Activated B cell treated with CpG ODN at 0.5 μM for 24 hours (primary cell): ENCODE measurements at regions of chr14 and their contacts with region 1.

Region 1: GRCh38 chr14:69153131-69153872 is 383 bp upstream of the DCAF5 start:
- DNase-seq: peak; percentile 81
- ATAC-seq: peak; percentile 93
- H3K4me3 Mint-ChIP-seq: peak overlapping the region; percentile 95
- H3K27ac Mint-ChIP-seq: peak overlapping the region; percentile 88
- H3K4me1 Mint-ChIP-seq: peaks cover 28% of the 10 kb centered on the region
- H3K27me3 Mint-ChIP-seq: no peaks in the 10 kb centered on the region
- CTCF ChIP-seq: no peak

Region 2: GRCh38 chr14:67704484-67705089 is 1448.7 kb before region 1 on chr14:
- CTCF ChIA-PET with region 1: no interaction called
- POLR2A ChIA-PET with region 1: interaction called, 10 read pairs
- intact Hi-C with region 1: no loop called
- DNase-seq: no peak
- ATAC-seq: peak; percentile 81
- H3K4me3 Mint-ChIP-seq: no peak overlapping the region
- H3K27ac Mint-ChIP-seq: no peak overlapping the region
- H3K4me1 Mint-ChIP-seq: no peaks in the 10 kb centered on the region
- H3K27me3 Mint-ChIP-seq: no peaks in the 10 kb centered on the region
- CTCF ChIP-seq: no peak

Region 3: GRCh38 chr14:69191340-69192111 is 38.2 kb after region 1 on chr14 and contains the start of gene EXD2:
- CTCF ChIA-PET with region 1: interaction called, 4 read pairs
- POLR2A ChIA-PET with region 1: interaction called, 23 read pairs
- intact Hi-C with region 1: loop called (anchors 1 kb)
- DNase-seq: peak; percentile 58
- ATAC-seq: peak; percentile 84
- H3K4me3 Mint-ChIP-seq: peak within 1 kb of the TSS; percentile 93
- H3K27ac Mint-ChIP-seq: peak within 1 kb of the TSS; percentile 83
- H3K4me1 Mint-ChIP-seq: peaks cover 16% of the 10 kb centered on the region
- H3K27me3 Mint-ChIP-seq: peaks cover 3% of the 10 kb centered on the region
- CTCF ChIP-seq: no peak
- total RNA-seq, gene EXD2: 5.2 and 6.9 TPM in 2 replicates

Region 4: GRCh38 chr14:69553221-69553620 is 399.9 kb after region 1 on chr14:
- CTCF ChIA-PET with region 1: no interaction called
- POLR2A ChIA-PET with region 1: no interaction called
- intact Hi-C with region 1: no loop called
- DNase-seq: no peak
- ATAC-seq: no peak
- H3K4me3 Mint-ChIP-seq: no peak overlapping the region
- H3K27ac Mint-ChIP-seq: no peak overlapping the region
- H3K4me1 Mint-ChIP-seq: no peaks in the 10 kb centered on the region
- H3K27me3 Mint-ChIP-seq: peaks cover 36% of the 10 kb centered on the region
- CTCF ChIP-seq: no peak

Region 5: DNA sequence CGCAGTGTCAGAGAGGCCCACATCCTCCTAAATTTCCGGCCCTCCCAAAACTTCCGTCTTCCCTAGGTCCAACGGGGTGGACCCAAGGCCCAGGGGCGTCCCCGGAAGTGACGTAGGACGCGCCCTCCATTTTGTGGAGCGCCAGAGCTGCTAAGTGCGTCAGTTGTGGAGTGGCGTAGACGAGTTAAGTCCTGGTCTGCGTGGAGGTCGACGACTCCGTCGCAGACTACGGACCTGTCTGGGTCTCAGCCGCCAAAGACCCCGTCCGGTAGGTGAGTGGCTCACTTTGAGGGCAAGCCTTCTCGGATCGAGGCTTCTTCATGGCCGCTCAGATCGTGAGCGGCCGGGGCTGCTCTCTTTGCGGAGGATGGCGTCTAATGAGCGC is 613.7 kb after region 1 on chr14 and contains the start of gene SRSF5:
- CTCF ChIA-PET with region 1: no interaction called
- POLR2A ChIA-PET with region 1: interaction called, 10 read pairs
- intact Hi-C with region 1: loop called (anchors 2 kb)
- DNase-seq: peak; percentile 92
- ATAC-seq: peak; percentile 78
- H3K4me3 Mint-ChIP-seq: peak within 1 kb of the TSS; percentile 98
- H3K27ac Mint-ChIP-seq: peak within 1 kb of the TSS; percentile 100
- H3K4me1 Mint-ChIP-seq: peaks cover 51% of the 10 kb centered on the region
- H3K27me3 Mint-ChIP-seq: no peaks in the 10 kb centered on the region
- CTCF ChIP-seq: no peak
- total RNA-seq, gene SRSF5: 394 and 422 TPM in 2 replicates